ENCODE measurements at regions of chr5 and their contacts with region 1.

Region 1: DNA sequence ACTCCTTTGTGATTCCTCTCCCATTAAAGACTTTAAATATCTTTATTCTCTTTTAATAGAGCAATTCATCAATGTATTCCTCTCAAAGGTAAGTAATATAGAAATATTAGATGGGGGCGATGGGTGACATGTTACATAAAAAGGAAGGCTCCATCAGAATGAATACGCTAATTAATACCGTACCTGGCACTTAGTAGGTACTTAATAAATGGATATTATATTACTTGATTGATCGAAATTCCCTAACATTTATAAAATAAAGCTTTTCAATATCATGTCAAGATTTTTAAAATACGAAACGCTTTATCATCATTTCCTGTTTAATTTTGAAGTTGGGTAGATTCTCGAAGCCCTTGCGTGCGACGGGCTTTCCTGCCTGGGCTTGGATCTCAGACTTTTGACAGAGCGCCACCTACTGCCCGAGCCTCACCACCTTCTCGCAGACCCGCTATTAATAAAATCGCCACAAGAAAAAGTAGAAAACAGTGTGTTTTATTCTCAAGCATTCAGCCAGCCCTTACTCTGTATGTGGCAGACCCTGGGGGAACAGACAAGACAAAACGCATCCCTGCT is 99.4 kb downstream of the C5orf15 start:
- DNase-seq: peak; percentile 53 to 62
- ATAC-seq: peak; percentile 79 to 80
- H3K4me3 ChIP-seq: peak overlapping the region; percentile 42 to 58 (median 44)
- H3K27ac ChIP-seq: peak overlapping the region; percentile 74 to 83 (median 77)
- H3K4me1 ChIP-seq: peaks cover 8 to 9% of the 10 kb centered on the region in 2 donors
- H3K27me3 ChIP-seq: no peaks in the 10 kb centered on the region
- CTCF ChIP-seq: peak; percentile 80 to 86 (median 82)
- POLR2A ChIP-seq: no peak

Region 2: DNA sequence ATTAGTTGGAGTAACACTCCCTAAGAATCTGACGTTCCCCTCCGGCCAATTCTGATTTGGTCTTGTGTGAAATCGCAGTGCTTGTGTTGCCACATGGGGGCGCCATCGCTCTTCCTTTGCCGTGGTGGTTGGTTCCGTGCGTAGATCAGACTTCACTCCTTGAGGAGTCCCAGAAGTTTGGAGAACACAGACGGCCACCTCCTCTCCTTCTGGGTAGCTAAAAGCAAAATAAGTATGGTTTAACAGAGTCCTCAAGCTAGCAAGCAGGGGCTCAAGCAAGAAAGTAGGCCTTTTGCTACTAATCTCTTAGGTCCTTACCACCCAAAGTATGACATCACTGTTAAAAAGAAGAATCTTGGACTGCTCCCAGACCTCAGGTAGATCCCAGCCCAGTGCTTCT is 757.7 kb before region 1 on chr5:
- in situ Hi-C with region 1: loop called in 1 of 4 experiments (anchors 25 kb)
- intact Hi-C with region 1: no loop called
- DNase-seq: peak; percentile 63 to 80
- ATAC-seq: peak; percentile 73 to 83
- H3K4me3 ChIP-seq: no peak overlapping the region
- H3K27ac ChIP-seq: no peak overlapping the region
- H3K4me1 ChIP-seq: peaks cover 21 to 26% of the 10 kb centered on the region in 2 donors
- H3K27me3 ChIP-seq: no peaks in the 10 kb centered on the region
- CTCF ChIP-seq: peak; percentile 89 to 94 (median 92)
- POLR2A ChIP-seq: no peak

Region 3: GRCh38 chr5:133754575-133755169 is 114.4 kb before region 1 on chr5:
- in situ Hi-C with region 1: loop called in 1 of 4 experiments (anchors 10 kb)
- intact Hi-C with region 1: loop called (anchors 1 kb)
- DNase-seq: peak; percentile 11 to 39
- ATAC-seq: peak; percentile 89
- H3K4me3 ChIP-seq: no peak overlapping the region
- H3K27ac ChIP-seq: no peak overlapping the region
- H3K4me1 ChIP-seq: no peaks in the 10 kb centered on the region
- H3K27me3 ChIP-seq: peaks cover 0 to 2% (median 0%) of the 10 kb centered on the region in 3 donors
- CTCF ChIP-seq: peak; percentile 36 to 67 (median 51)
- POLR2A ChIP-seq: no peak

Region 4: DNA sequence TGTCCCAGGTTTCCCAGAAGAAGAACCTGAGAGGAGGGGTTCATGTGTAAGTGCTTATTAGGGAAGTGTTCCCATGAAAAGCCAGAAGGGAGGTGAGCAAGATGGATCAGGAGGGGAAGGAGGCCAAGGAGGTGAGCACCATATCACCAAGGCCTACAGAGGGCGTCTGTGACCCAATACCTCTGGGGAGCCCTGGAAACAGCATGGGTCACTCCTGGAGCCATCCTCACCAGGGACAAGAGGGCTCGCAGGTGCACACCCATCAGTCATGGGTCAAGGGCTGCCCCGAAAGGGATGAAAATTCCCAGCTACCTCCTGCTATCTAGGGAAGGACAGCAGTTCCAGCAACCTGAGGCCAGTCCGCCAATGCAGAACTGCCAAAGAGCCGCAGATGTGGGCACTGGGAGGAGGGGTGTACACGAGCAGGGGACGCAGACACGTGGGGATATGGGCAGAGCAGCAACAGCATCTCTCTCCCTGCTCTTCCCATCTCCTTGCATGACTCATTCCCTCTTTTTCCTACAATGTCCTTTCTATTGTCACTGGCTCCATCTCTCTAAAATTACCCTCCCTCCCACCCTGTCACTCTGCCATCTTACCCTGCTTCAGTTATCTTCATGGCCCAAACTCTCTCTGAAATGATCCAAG is 89.1 kb before region 1 on chr5:
- in situ Hi-C with region 1: loop called in 3 of 4 experiments (anchors 10 kb)
- intact Hi-C with region 1: no loop called
- DNase-seq: peak in 1 of 2 donors; percentile 19
- ATAC-seq: peak; percentile 29 to 37
- H3K4me3 ChIP-seq: no peak overlapping the region
- H3K27ac ChIP-seq: peak overlapping the region; percentile 73 to 87 (median 78)
- H3K4me1 ChIP-seq: peaks cover 6 to 10% of the 10 kb centered on the region in 2 donors
- H3K27me3 ChIP-seq: no peaks in the 10 kb centered on the region
- CTCF ChIP-seq: no peak
- POLR2A ChIP-seq: no peak

Region 5: GRCh38 chr5:133824661-133825254 is 44.3 kb before region 1 on chr5:
- in situ Hi-C with region 1: no loop called
- intact Hi-C with region 1: loop called (anchors 2 kb)
- DNase-seq: no peak
- ATAC-seq: no peak
- H3K4me3 ChIP-seq: no peak overlapping the region
- H3K27ac ChIP-seq: peak overlapping the region in 1 of 4 donors; percentile 61
- H3K4me1 ChIP-seq: peaks cover 19 to 26% of the 10 kb centered on the region in 2 donors
- H3K27me3 ChIP-seq: no peaks in the 10 kb centered on the region
- CTCF ChIP-seq: no peak
- POLR2A ChIP-seq: no peak